ENCODE measurements at regions of chr2 and their contacts with region 1.

Region 1: GRCh38 chr2:174158003-174158402 is 90.3 kb downstream of the OLA1 start:
- DNase-seq: peak; percentile 27
- H3K4me3 ChIP-seq: no peak overlapping the region
- H3K27ac ChIP-seq: no peak overlapping the region
- H3K4me1 ChIP-seq: peaks cover 29% of the 10 kb centered on the region
- H3K27me3 ChIP-seq: no peaks in the 10 kb centered on the region
- CTCF ChIP-seq: peak; percentile 68 to 70

Region 2: DNA sequence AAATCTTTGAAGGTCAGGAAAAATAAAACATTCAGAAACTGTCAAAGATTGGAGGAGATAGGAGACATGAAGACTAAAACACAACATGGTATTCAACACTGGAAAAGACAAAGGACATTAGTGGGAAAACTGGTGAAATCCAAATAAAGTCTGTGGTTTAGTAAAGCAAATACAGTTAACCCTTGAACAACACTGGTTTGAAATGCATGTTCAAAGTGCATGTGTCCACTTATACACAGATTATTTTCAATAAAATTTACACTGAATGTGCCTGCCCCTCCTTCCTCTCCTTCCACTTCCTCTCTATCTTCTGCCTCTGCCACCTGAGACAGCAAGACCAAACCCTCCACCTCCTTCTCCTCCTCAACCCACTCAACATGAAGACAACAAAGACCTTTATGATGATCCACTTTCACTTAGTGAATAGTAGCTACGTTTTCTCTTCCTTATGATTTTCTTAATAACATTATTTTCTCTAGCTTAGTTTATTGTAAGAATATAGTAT is 75.8 kb after region 1 on chr2:
- CTCF ChIA-PET with region 1: interaction called, 18 read pairs
- dilution Hi-C with region 1: no loop called
- in situ Hi-C with region 1: no loop called
- intact Hi-C with region 1: no loop called
- DNase-seq: no peak
- H3K4me3 ChIP-seq: no peak overlapping the region
- H3K27ac ChIP-seq: no peak overlapping the region
- H3K4me1 ChIP-seq: peaks cover 10% of the 10 kb centered on the region
- H3K27me3 ChIP-seq: no peaks in the 10 kb centered on the region
- CTCF ChIP-seq: no peak

Region 3: DNA sequence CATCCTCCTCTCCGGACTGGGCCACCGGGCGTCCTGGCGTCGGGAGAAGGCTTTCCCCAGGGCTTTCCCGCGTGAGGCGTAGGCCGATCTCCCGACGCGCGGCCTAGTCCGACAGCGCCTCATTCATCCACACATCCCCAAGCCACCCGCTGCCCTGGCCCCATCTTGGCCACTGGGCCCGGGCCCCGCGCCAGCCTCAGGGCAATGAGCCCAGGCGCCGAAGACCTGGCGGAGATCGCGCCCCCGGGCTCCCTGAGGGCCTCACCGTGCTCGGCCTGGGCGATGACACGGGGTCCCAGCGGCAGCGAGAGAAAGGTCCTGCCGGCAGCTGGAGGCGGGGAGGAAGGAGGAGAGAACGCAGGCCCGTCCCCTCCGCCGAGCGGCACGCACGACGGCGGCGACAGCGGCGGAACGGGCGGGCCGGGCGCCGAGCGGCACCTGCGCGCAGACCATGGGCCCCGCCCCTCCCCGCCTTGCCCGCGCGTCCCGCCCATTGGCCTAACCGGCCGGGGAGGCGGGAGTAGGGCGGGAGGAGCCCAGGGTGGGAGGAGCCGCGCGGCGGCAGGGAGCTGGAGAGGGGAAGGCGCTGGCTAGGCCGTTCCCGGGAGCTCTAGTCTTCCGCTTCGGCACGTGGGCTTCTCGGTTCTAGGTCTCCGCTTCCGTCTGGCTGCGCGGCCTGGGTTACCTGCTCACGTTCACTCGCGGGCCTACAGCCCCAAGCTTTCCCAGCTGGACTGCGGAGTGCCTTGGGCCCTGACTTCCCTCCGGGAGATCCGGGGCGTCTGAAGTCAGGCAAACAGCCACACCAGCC is 90.4 kb after region 1 on chr2 and contains the start of gene OLA1:
- CTCF ChIA-PET with region 1: no interaction called
- dilution Hi-C with region 1: no loop called
- in situ Hi-C with region 1: no loop called
- intact Hi-C with region 1: loop called (anchors 1 kb)
- DNase-seq: peak; percentile 96
- H3K4me3 ChIP-seq: peak within 1 kb of the TSS; percentile 67 to 81 (median 73)
- H3K27ac ChIP-seq: peak within 1 kb of the TSS; percentile 79
- H3K4me1 ChIP-seq: peaks cover 21% of the 10 kb centered on the region
- H3K27me3 ChIP-seq: no peaks in the 10 kb centered on the region
- CTCF ChIP-seq: peak in 1 of 2 donors; percentile 9
- total RNA-seq, gene OLA1: 104 to 150 TPM